GM18951 (cell line): ENCODE measurements at regions of chr5 and their contacts with region 1.

Region 1: DNA sequence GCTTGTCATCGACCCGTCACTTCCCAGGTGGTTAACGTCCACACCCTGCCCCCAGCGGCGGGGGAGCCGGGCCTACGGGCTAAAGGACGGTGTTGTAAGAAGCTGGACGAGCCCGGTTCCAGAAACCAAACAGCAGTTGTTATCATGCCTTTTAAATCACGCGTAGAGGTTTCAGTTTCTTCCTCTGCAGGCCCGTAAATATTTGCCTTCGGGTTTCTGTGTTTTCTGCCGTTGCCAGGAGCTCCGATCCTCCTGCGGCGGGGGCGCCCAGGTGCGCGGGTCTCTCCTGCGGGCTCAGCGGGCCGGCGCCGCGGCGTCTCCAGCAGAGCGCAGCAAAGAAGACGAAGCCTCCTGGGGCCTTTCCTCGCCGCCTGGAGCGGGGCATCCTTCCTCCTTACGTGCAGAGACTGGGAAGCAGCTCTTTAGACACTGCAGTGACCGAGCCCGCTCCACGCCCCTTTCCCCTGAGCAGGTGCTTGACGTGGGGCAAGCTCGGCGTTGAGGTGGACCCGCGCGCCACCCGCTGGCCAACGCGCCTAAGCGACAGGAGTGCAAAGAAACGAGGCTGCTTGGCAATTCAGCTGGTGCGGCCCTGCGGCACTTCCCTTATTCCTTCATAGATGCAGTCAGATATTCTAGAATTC is 21.8 kb upstream of the TTC1 start:
- POLR2A ChIP-seq: no peak

Region 2: DNA sequence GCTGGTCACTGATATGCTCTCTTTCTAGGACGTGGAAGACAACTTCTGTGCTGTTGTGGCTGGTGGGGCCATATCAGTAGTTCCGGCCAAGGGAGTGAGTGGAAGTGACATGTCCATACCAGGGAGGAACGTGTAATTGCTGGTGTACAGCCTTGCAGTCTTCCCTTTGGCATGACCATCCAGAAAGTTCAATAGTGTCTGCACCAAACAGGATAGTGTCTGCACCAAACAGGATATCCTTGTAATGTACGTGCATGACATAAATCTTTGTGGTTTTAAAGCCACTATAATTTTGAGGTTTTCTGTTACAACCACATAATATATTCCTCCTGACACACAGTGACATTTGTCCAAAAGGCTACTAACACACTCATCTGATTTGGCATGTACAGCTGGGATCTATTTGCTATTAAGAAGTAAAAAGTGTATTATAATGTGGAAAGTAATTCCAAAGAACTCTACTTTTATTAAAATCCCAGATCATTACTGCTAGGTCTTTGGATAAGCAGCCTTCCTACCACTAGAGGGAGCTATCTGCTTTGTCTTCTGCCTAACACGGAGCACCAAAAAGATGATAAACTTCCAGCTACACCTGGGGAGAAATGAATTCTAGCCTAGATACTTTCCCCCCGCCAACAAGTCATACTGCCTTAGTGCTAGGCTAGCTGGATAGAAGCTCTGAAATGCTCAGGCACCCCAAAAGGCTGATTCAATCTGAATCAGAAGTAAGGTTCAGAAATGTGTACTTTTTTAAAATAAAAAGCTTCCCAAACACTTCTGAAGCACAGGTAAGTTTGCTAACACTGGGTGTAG is 830.5 kb before region 1 on chr5:
- in situ Hi-C with region 1: loop called (anchors 25 kb)
- POLR2A ChIP-seq: no peak

Region 3: GRCh38 chr5:159286420-159287035 is 700.6 kb before region 1 on chr5:
- in situ Hi-C with region 1: loop called (anchors 25 kb)
- POLR2A ChIP-seq: no peak

Region 4: DNA sequence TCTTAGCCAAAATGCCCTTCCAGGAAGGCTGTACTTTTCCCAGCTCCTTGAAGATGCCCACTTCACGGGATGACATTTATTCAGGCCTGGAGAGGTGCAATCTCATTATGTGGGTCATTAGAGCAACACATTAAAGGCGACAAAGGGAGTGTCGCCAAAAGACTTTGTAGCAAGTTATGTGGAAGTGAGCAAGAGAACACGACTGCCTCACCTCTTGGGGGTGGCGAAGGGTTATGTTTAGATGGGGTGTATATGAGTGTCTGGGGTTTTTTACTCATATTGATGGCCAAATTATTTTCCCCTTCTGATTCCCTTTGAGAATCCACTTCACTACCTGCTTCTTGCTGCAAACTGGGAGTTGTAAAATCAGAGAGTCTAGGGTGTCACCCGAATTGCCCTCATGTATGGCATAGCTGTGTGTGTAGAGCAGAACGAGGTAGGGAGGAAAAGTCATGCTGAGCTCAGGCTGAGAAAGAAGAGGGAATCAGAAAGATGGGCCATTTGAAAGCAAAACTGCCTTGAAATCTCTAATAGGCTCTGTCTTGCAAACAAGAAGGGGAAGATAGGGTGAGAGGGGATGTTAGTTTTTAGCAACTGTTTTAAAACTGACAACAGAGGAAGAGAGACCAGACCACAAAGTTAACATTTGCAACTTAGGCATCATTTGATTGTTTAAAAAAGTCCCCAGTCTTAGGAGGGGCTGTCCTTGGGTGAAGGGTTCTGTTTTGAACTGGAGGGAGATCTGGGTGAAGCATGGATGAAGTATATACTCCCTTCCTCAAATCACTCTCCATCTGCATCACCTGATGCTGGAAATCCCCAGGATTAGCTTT is 559.8 kb before region 1 on chr5:
- in situ Hi-C with region 1: loop called (anchors 10 kb)
- POLR2A ChIP-seq: no peak

Region 5: DNA sequence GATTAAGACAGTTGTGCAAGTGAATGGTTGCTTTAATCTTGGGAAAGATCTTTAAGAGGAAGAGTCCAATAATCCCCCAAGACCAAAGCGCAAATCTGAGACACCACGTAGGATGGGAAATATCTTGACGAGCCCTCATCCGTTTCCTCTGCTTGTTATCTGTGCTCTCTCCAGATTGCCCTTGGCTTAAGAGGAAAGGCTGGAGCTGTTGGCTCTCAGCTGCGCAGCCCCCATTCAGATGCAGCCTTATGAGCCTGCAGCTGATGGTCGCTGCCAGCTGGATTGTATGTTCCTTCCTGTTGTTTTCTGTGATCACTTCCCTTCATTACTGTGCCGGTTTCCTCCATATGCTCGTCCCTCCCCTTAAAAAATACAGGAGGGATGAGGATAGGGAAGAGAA is 84.4 kb after region 1 on chr5:
- in situ Hi-C with region 1: no loop called
- POLR2A ChIP-seq: no peak

Region 6: GRCh38 chr5:160230686-160231527 is 243.8 kb after region 1 on chr5:
- in situ Hi-C with region 1: no loop called
- POLR2A ChIP-seq: no peak

Region 7: DNA sequence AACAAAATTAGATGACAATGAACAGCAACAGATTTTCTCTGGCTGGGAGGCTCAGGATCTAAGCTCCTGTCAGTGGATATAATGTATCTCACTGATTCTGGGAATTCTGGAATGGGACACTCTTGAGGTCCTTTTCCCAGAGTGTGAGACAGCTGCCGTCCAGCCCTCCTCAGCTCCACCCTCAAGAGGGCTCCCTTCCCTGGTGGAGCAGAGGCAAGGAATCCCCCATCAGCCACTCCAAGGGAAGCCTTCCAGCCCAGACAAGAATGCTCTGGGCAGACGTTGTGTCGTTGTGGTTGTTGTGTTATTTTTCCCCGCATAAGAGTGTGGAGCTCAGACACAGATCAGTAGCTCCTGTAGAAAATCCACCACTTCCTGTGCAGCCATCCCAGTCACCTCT is 912.6 kb after region 1 on chr5:
- in situ Hi-C with region 1: no loop called
- POLR2A ChIP-seq: no peak